ENCODE measurements at regions of chr1 and their contacts with region 1.

Region 1: DNA sequence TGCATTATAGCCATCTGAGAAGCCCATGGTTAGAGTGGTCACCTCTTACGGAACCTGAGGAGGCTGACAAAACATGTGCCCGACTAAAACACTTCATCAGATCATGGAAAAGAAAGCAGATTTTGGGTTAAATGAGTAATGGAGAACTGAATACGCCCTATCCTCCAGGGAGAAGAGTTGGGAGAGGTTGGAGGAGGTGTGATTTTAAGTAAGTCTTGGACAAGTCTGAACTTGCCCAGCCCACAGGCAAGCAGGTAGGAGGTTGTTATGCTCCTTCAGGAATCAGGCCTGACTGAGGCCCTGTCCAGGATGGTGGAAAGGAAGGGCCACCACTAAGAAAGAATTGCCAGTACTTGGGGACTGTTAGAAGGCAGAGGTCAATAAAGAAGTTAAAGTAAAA is 255.8 kb downstream of the TGFB2 start:
- DNase-seq: no peak
- H3K4me3 ChIP-seq: no peak overlapping the region
- H3K27ac ChIP-seq: no peak overlapping the region
- H3K4me1 ChIP-seq: no peaks in the 10 kb centered on the region
- H3K27me3 ChIP-seq: no peaks in the 10 kb centered on the region
- CTCF ChIP-seq: no peak
- POLR2A ChIP-seq: no peak

Region 2: GRCh38 chr1:218686258-218686657 is 85.3 kb after region 1 on chr1:
- intact Hi-C with region 1: no loop called
- DNase-seq: no peak
- H3K4me3 ChIP-seq: no peak overlapping the region
- H3K27ac ChIP-seq: no peak overlapping the region
- H3K4me1 ChIP-seq: no peaks in the 10 kb centered on the region
- H3K27me3 ChIP-seq: no peaks in the 10 kb centered on the region
- CTCF ChIP-seq: no peak
- POLR2A ChIP-seq: no peak

Region 3: DNA sequence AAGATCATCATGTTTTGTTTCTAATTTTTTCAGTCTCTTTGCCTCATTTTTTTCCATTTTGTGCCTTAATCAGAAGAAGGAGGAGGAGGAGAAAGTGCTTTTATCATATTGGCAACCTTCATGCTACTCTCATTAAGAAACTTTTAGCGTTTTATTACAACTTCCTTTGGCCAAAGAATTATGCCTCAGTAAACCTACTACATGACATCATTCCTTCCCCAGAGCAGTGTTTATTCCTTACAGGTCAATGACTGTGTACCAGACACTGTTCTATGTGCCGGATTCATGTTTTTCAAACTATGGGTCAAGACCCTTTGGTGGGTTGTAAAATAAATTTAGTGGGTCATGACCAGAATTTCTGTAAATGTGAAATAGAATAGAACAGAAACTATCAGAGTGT is 1216.9 kb after region 1 on chr1:
- intact Hi-C with region 1: loop called (anchors 5 kb)
- DNase-seq: no peak
- H3K4me3 ChIP-seq: no peak overlapping the region
- H3K27ac ChIP-seq: no peak overlapping the region
- H3K4me1 ChIP-seq: no peaks in the 10 kb centered on the region
- H3K27me3 ChIP-seq: no peaks in the 10 kb centered on the region
- CTCF ChIP-seq: no peak
- POLR2A ChIP-seq: no peak

Measured in prostate gland (tissue), 2 donors.